AG04450 (cell line): ENCODE measurements at regions of chr3 and their contacts with region 1.

Region 1: GRCh38 chr3:160686955-160687535 is 10.1 kb downstream of the ARL14 start:
- DNase-seq: no peak
- H3K4me3 ChIP-seq: no peak overlapping the region
- H3K27ac ChIP-seq: no peak overlapping the region
- H3K27me3 ChIP-seq: no peaks in the 10 kb centered on the region
- CTCF ChIP-seq: peak; percentile 53

Region 2: GRCh38 chr3:158920371-158920770 is 1766.7 kb before region 1 on chr3:
- CTCF ChIA-PET with region 1: no interaction called
- POLR2A ChIA-PET with region 1: no interaction called
- DNase-seq: no peak
- H3K4me3 ChIP-seq: no peak overlapping the region
- H3K27ac ChIP-seq: no peak overlapping the region
- H3K27me3 ChIP-seq: no peaks in the 10 kb centered on the region
- CTCF ChIP-seq: no peak

Region 3: GRCh38 chr3:160667444-160667843 is 19.6 kb before region 1 on chr3:
- CTCF ChIA-PET with region 1: interaction called, 10 read pairs
- POLR2A ChIA-PET with region 1: no interaction called
- DNase-seq: no peak
- H3K4me3 ChIP-seq: no peak overlapping the region
- H3K27ac ChIP-seq: no peak overlapping the region
- H3K27me3 ChIP-seq: no peaks in the 10 kb centered on the region
- CTCF ChIP-seq: no peak

Region 4: DNA sequence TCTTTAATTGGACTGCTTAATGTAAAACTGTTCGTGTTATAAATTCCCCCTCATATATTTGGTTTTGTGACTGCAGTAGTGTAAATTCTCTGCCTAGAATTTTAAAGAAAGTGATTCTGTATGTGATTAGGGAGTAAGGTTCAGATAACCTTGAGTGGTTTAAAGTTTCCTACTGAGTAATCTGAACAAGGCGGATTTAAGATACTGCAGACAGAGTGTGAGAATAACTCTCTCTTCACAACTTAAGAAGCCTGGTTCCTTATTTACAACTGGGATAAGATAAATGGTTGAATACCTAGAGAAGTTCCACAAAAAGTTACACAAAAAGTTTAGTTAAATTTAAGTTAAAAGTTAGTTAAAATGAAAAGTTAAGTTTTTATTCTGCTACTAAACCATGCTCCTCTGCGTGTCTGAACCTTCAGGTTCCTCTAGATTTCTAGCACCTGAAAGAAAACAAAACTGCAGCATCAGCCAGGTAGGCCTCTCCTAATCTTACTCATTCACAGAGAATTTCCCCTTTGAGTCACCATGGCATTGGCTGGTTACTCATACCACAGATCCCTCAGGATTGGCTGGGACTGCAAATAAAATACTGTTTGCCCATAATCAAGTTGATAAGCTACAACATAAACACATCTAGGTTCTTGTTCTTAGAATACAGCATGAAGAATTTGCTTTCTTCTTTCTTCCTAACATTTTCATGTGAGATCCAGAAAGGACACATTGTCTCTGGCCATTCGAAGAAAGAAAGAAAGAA is 10.3 kb before region 1 on chr3 and contains the start of gene ARL14:
- CTCF ChIA-PET with region 1: interaction called, 31 read pairs
- POLR2A ChIA-PET with region 1: no interaction called
- DNase-seq: no peak
- H3K4me3 ChIP-seq: no peak within 1 kb of the TSS
- H3K27ac ChIP-seq: no peak within 1 kb of the TSS
- H3K27me3 ChIP-seq: no peaks in the 10 kb centered on the region
- CTCF ChIP-seq: no peak
- polyA plus RNA-seq, gene ARL14: 0.09 TPM in 1 of 2 replicates, not detected in the other

Region 5: DNA sequence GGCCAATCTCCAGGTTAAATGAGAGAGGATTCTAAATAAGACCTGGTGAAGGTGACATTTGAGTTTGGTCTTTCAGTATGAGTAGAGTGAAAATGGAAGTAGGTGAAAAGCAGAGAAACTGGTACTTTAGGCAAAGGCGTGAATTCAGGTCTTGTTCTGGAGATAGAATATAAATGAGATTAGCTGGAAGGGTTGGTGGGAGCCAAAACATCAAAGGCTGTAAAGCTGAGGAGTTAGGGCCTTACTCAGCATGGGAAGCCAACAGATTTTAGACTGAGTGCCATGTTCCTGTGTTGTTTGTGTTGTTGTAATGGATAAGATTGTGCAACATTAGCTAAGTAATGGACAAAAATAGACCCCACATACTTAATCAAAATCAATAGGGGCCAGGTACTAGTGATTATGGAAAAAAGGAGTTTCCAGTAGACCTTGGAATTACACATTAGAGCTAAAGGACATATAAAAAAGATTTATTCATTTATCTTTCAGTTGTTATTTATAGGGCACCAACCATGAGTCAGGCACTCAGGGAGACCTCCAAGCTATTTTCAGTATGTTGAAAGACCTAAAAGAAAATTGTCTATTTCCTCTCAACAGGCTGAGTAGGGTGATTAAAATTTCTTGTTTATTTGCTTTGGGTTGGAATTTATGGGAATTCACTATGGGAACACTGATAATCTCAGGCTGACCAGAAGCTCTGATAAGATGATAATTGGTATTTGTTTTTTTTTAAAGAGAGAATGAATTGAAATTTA is 10.8 kb after region 1 on chr3:
- CTCF ChIA-PET with region 1: interaction called, 44 read pairs
- POLR2A ChIA-PET with region 1: no interaction called
- DNase-seq: no peak
- H3K4me3 ChIP-seq: no peak overlapping the region
- H3K27ac ChIP-seq: no peak overlapping the region
- H3K27me3 ChIP-seq: no peaks in the 10 kb centered on the region
- CTCF ChIP-seq: no peak

Region 6: DNA sequence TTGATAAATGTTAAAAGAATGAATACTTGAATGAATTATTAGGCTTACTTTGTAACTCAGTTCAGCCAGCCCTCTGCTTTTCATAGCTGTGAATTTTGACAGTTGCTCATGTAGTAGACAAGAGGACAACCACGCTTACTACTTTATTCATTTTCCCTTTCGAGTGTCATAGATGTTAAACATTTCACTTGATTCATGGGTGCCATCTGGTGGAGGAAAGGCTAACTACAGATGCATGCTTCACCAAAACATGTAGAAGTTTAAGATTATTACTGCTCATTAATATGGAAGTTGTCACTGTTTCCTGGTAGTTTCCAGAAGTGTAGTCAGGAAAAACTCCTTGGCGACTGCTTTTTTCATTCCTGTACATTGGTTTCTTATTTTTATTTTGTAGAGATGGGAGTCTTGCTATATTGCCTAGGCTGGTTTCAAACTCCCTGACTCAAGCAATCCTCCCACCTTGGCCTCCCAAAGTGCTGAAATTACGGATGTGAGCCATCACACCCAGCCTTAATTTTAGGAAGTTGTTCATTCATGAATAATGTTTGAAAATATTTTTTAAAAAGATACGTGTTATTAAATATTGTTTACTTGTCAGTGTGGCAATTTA is 254.9 kb after region 1 on chr3:
- CTCF ChIA-PET with region 1: interaction called, 72 read pairs
- POLR2A ChIA-PET with region 1: no interaction called
- DNase-seq: peak; percentile 24
- H3K4me3 ChIP-seq: no peak overlapping the region
- H3K27ac ChIP-seq: no peak overlapping the region
- H3K27me3 ChIP-seq: no peaks in the 10 kb centered on the region
- CTCF ChIP-seq: peak; percentile 85

Region 7: DNA sequence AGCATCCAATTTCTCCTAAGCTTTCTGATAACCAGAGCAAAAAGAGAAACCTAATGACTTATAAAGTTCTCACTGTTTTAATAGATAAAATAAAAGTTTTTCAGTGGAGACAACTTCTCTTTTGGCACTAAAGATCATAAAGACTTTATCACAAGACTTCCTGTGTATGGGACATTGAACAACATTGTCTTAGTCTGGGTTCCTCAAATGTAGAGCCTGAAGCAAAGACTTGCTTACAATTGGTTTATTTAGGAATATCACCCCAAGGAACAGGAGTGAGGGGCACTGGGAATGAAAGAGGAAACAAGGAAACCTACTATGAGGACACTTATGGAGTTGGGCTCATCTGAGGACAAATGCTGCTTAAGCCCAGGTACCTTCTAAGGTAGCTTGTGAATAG is 290.7 kb after region 1 on chr3:
- CTCF ChIA-PET with region 1: no interaction called
- POLR2A ChIA-PET with region 1: no interaction called
- DNase-seq: no peak
- H3K4me3 ChIP-seq: no peak overlapping the region
- H3K27ac ChIP-seq: no peak overlapping the region
- H3K27me3 ChIP-seq: no peaks in the 10 kb centered on the region
- CTCF ChIP-seq: no peak

Region 8: DNA sequence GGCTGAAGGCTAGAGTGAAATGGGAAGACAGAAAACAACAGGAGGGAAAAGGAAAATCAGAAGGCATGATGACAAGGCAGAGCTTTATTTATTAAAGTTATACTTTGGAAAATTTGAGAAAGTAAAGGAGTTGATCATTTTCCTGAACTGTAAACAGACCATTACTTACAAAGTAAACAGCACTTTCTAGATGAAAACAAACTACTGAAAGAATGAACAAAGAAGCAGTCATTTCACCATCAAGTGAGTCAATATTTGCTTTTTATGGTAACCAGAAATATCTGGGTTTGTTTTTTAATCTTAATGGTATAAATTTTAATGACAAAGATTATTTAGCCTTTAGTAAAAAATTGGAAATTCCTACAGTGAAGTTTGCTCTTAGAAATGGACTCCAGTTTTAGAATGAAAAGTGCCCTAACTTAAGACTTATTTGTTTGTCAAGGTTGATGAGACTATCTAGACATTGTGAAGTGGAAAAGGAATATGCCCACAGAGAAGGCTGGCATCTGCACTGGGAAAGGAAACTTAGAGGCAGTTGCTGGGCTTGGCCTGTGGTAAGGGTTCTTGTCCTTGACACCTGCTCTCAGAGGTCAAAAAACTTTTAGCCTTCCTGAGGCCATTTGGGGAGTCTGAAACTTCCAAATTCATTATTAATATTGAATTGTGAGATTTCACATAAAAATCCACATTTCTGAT is 637.0 kb after region 1 on chr3:
- CTCF ChIA-PET with region 1: no interaction called
- POLR2A ChIA-PET with region 1: no interaction called
- DNase-seq: no peak
- H3K4me3 ChIP-seq: no peak overlapping the region
- H3K27ac ChIP-seq: no peak overlapping the region
- H3K27me3 ChIP-seq: no peaks in the 10 kb centered on the region
- CTCF ChIP-seq: no peak

Region 9: GRCh38 chr3:161423911-161424522 is 737.0 kb after region 1 on chr3:
- CTCF ChIA-PET with region 1: interaction called, 12 read pairs
- POLR2A ChIA-PET with region 1: no interaction called
- DNase-seq: no peak
- H3K4me3 ChIP-seq: no peak overlapping the region
- H3K27ac ChIP-seq: no peak overlapping the region
- H3K27me3 ChIP-seq: no peaks in the 10 kb centered on the region
- CTCF ChIP-seq: peak; percentile 58